ENCODE measurements at regions of chr5 and their contacts with region 1.

Region 1: DNA sequence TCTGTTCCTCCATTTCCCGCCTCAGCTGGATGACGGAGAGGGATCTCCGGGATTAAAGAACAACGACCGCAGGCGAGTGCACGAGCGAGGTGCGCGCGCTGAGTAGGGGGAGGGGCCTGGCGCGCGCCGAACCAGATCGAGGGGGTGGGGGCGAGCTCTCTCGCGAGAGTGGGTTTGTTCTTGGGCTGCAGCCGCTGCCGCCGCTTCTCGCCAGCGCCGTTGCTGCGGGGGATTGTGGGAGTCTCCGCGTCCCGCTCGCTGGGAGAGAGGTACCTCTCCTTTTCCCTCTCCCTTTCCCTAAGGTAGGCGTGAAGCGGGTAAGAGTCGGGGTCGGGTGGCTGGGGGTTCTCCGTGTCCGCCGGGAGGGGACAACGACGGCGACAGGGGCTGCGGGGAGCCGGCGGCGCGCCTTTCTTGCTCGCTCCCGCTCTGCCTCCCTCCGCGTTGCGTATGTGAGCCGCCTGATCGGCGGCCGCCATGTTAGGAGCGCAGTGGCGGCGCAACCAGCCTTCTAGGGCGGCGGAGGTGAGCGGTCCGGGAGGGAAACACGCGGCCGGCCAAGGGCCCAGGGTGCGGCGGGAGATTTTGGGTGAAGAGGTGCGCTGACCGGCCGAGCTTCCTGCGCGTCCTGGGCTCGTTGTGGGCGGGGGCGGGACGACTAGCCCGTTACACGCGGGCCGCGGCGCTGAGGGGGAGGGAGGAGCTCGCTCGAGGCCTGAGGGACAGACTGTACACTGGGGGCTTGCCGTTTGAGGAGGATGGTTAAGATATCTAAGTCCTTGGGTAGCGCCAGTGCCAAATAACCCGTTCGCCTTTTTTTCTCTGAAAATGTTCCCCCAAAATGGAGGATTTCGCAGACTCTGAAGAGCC is at the start of gene MATR3:
- DNase-seq: peak; percentile 89
- ATAC-seq: peak; percentile 86
- H3K4me3 ChIP-seq: peak within 1 kb of the TSS; percentile 92 to 99 (median 97)
- H3K27ac ChIP-seq: peak within 1 kb of the TSS; percentile 97
- H3K4me1 ChIP-seq: peaks cover 33% of the 10 kb centered on the region
- H3K27me3 ChIP-seq: no peaks in the 10 kb centered on the region; a peak in 1 of 5 replicates
- CTCF ChIP-seq: no peak
- EP300 ChIP-seq: 0 out of 4 replicates have a peak, but pooled peaks of 1 of the 2 experiments have one; percentile 25
- POLR2A ChIP-seq: peak; percentile 90 to 98
- RAD21 ChIP-seq: peak; percentile 17; the same call in 1 of the 2 replicates
- total RNA-seq, gene MATR3: 341 and 484 TPM in 2 replicates

Region 2: DNA sequence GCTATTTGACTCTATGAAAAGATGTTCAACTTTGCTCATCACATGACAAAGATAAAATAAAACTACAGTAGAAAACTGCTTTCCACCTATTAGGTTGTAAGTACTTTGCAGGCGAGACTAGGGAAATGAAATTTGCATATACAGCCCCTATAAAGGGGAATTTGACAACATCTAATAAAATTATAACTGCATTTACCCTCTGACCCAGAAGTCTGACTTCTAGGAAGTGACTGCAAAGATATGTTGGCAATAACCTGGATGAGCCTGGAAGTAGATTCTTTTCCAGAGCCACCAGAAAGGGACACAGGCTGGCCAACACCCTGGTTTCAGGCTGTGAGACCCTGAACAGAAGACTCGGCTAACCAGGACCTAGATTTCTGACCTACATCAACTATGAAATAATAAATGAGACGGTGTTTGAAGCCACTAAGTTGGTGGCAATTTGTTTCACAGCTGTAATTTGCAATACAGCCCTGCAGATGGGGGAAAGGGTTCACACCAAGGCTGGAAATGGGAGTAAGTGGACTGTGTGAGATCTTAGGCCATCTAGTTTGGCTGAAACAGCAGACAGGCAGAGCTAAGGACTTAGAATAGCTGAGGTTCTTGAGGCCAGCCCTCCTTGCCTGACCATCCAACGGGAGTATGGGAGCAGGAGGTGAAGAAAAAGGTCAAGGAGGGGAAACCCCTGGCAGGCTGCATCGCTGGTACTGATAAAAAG is 202.1 kb before region 1 on chr5:
- CTCF ChIA-PET with region 1: no interaction called
- POLR2A ChIA-PET with region 1: no interaction called
- in situ Hi-C with region 1: no loop called
- intact Hi-C with region 1: no loop called
- DNase-seq: no peak
- ATAC-seq: peak; percentile 51; the same call in 2 of the 3 replicates
- H3K4me3 ChIP-seq: no peak overlapping the region
- H3K27ac ChIP-seq: no peak overlapping the region
- H3K4me1 ChIP-seq: 0 out of 2 replicates have a peak, but pooled peaks cover 10% of the 10 kb centered on the region
- H3K27me3 ChIP-seq: no peaks in the 10 kb centered on the region
- CTCF ChIP-seq: peak; percentile 32; the same call in 1 of the 2 replicates
- EP300 ChIP-seq: no peak
- POLR2A ChIP-seq: no peak
- RAD21 ChIP-seq: no peak

Region 3: GRCh38 chr5:139341650-139342422 is 48.1 kb after region 1 on chr5 and contains the start of gene PAIP2:
- CTCF ChIA-PET with region 1: no interaction called
- POLR2A ChIA-PET with region 1: interaction called, 38 read pairs
- in situ Hi-C with region 1: no loop called
- intact Hi-C with region 1: loop called (anchors 1 kb)
- DNase-seq: peak; percentile 94
- ATAC-seq: peak; percentile 85
- H3K4me3 ChIP-seq: peak within 1 kb of the TSS; percentile 74 to 98 (median 84)
- H3K27ac ChIP-seq: peak within 1 kb of the TSS; percentile 99
- H3K4me1 ChIP-seq: peaks cover 43% of the 10 kb centered on the region
- H3K27me3 ChIP-seq: no peaks in the 10 kb centered on the region; a peak in 1 of 5 replicates
- CTCF ChIP-seq: peak; percentile 96
- EP300 ChIP-seq: peak; percentile 39 to 49; a peak in 2 of 4 replicates
- POLR2A ChIP-seq: peak; percentile 83 to 95
- RAD21 ChIP-seq: peak; percentile 65
- total RNA-seq, gene PAIP2: 61.5 and 104 TPM in 2 replicates